ENCODE measurements at regions of chr6 and their contacts with region 1.

Region 1: DNA sequence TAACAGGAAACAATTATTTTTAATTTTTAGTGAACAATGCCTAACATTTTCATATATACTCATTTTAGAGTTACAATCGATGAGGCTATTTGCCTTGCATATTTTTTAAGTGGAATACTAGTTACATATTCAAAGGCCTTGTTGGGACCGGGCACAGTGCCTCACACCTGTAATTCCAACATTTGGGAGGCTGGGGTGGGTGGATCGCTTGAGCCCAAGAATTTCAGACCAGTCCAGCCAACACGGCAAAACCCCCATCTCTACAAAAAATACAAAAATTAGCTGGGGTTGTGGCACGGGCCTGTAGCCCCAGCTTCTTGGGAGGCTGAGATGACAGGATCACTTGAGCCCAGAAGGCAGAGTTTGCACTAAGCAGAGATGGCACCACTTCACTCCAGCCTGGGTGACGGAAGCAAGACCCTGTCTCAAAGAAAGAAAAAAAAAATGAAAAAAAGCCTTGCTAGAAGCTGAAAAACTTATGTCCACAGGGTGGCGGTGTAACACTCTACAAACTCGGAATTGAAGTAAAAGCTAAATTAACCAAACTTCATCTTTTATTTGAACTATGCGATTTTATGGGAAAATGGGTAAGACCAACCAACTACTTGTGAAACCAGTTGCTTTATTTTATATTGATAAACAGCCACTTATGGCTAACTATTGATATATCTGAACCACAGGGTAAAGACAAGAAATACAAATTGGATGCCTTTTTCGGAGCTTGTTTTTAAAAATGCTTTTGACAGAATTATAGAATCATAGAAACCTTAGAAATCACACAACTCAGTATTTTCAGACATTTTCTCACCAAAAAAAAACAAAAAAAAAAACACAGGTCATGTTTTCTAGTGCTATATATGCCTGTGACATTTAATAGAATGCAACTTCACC is 24.1 kb upstream of the ROS1 start:
- DNase-seq: peak; percentile 83
- ATAC-seq: no peak; the same call in 1 of the 2 replicates
- H3K4me3 ChIP-seq: no peak overlapping the region
- H3K27ac ChIP-seq: peak overlapping the region; percentile 47; the same call in 1 of the 2 replicates
- H3K4me1 ChIP-seq: peaks cover 12% of the 10 kb centered on the region
- H3K27me3 ChIP-seq: no peaks in the 10 kb centered on the region
- CTCF ChIP-seq: peak; percentile 82
- POLR2A ChIP-seq: no peak
- RAD21 ChIP-seq: peak; percentile 84

Region 2: GRCh38 chr6:117482240-117483003 is 32.6 kb after region 1 on chr6 and contains the start of gene DCBLD1:
- CTCF ChIA-PET with region 1: interaction called, 5 read pairs
- POLR2A ChIA-PET with region 1: no interaction called
- dilution Hi-C with region 1: no loop called
- in situ Hi-C with region 1: no loop called
- intact Hi-C with region 1: loop called (anchors 2 kb)
- DNase-seq: peak; percentile 70
- ATAC-seq: peak; percentile 91
- H3K4me3 ChIP-seq: peak within 1 kb of the TSS; percentile 98
- H3K27ac ChIP-seq: peak within 1 kb of the TSS; percentile 87
- H3K4me1 ChIP-seq: peaks cover 2% of the 10 kb centered on the region; the same call in 1 of the 2 replicates
- H3K27me3 ChIP-seq: no peaks in the 10 kb centered on the region
- CTCF ChIP-seq: 0 out of 2 replicates have a peak, but pooled peaks have one; percentile 4
- POLR2A ChIP-seq: peak; percentile 68
- RAD21 ChIP-seq: no peak
- total RNA-seq, gene DCBLD1: 27.8 and 30.0 TPM in 2 replicates

Region 3: GRCh38 chr6:117555882-117556498 is 106.2 kb after region 1 on chr6:
- CTCF ChIA-PET with region 1: interaction called, 17 read pairs
- POLR2A ChIA-PET with region 1: no interaction called
- dilution Hi-C with region 1: no loop called
- in situ Hi-C with region 1: loop called (anchors 5 kb)
- intact Hi-C with region 1: loop called (anchors 1 kb)
- DNase-seq: peak; percentile 31
- ATAC-seq: peak; percentile 59
- H3K4me3 ChIP-seq: no peak overlapping the region
- H3K27ac ChIP-seq: no peak overlapping the region
- H3K4me1 ChIP-seq: peaks cover 2% of the 10 kb centered on the region; the same call in 1 of the 2 replicates
- H3K27me3 ChIP-seq: no peaks in the 10 kb centered on the region
- CTCF ChIP-seq: peak; percentile 82
- POLR2A ChIP-seq: no peak
- RAD21 ChIP-seq: peak; percentile 75

Region 4: GRCh38 chr6:117607511-117607910 is 157.7 kb after region 1 on chr6:
- CTCF ChIA-PET with region 1: interaction called, 15 read pairs
- POLR2A ChIA-PET with region 1: interaction called, 10 read pairs
- dilution Hi-C with region 1: no loop called
- in situ Hi-C with region 1: loop called (anchors 5 kb)
- intact Hi-C with region 1: loop called (anchors 1 kb)
- DNase-seq: no peak
- ATAC-seq: no peak
- H3K4me3 ChIP-seq: no peak overlapping the region
- H3K27ac ChIP-seq: no peak overlapping the region
- H3K4me1 ChIP-seq: no peaks in the 10 kb centered on the region
- H3K27me3 ChIP-seq: peaks cover 2% of the 10 kb centered on the region
- CTCF ChIP-seq: no peak
- POLR2A ChIP-seq: no peak
- RAD21 ChIP-seq: no peak